Activated CD4-positive, alpha-beta T cell treated with anti-CD3 and anti-CD28 coated beads for 36 hours (primary cell): ENCODE measurements at regions of chr18 and their contacts with region 1.

Region 1: DNA sequence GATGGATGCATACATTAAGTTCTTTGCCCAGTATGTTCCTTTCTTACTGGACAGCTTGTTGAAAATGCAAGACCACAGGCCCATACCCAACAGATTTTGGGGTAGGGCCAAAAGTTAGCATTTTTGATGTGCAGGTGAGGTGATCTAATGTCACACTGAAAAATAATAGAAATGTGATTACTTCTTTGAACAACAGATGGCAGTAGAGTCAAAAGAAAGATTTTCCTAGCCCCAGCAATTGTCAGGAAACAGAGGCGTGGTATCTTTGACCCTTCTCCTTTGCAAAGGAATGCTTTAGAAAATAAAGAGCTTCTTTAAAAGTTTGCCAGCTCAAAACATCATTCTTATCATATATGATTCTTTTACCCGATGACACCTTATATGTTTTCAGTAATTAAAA is 343.6 kb upstream of the SYT4 start:
- DNase-seq: no peak
- ATAC-seq: no peak
- H3K4me3 Mint-ChIP-seq: no peak overlapping the region
- H3K27ac Mint-ChIP-seq: no peak overlapping the region
- H3K4me1 Mint-ChIP-seq: no peaks in the 10 kb centered on the region
- H3K27me3 Mint-ChIP-seq: peaks cover 2% of the 10 kb centered on the region

Region 2: GRCh38 chr18:44325903-44326635 is 705.1 kb after region 1 on chr18:
- CTCF ChIA-PET with region 1: no interaction called
- POLR2A ChIA-PET with region 1: no interaction called
- intact Hi-C with region 1: loop called in 1 of 2 experiments (anchors 5 kb)
- DNase-seq: peak; percentile 52
- ATAC-seq: no peak
- H3K4me3 Mint-ChIP-seq: no peak overlapping the region
- H3K27ac Mint-ChIP-seq: no peak overlapping the region
- H3K4me1 Mint-ChIP-seq: no peaks in the 10 kb centered on the region
- H3K27me3 Mint-ChIP-seq: no peaks in the 10 kb centered on the region